PC-9 (cell line): ENCODE measurements at regions of chr20 and their contacts with region 1.

Region 1: GRCh38 chr20:1810926-1811620 is 84.1 kb upstream of the SIRPA start:
- DNase-seq: no peak
- H3K4me3 ChIP-seq: no peak overlapping the region
- H3K27ac ChIP-seq: peak overlapping the region; percentile 86
- H3K4me1 ChIP-seq: peaks cover 58% of the 10 kb centered on the region
- H3K27me3 ChIP-seq: no peaks in the 10 kb centered on the region
- CTCF ChIP-seq: no peak

Region 2: GRCh38 chr20:1776681-1777475 is 34.2 kb before region 1 on chr20:
- CTCF ChIA-PET with region 1: interaction called, 13 read pairs
- POLR2A ChIA-PET with region 1: no interaction called
- intact Hi-C with region 1: no loop called
- DNase-seq: peak; percentile 86 to 90
- H3K4me3 ChIP-seq: peak overlapping the region; percentile 70
- H3K27ac ChIP-seq: peak overlapping the region; percentile 74
- H3K4me1 ChIP-seq: peaks cover 27% of the 10 kb centered on the region
- H3K27me3 ChIP-seq: no peaks in the 10 kb centered on the region
- CTCF ChIP-seq: peak; percentile 89

Region 3: GRCh38 chr20:1830240-1830639 is 19.2 kb after region 1 on chr20:
- CTCF ChIA-PET with region 1: no interaction called
- POLR2A ChIA-PET with region 1: interaction called, 45 read pairs
- intact Hi-C with region 1: loop called (anchors 1 kb)
- DNase-seq: peak; percentile 83 to 86
- H3K4me3 ChIP-seq: no peak overlapping the region
- H3K27ac ChIP-seq: no peak overlapping the region
- H3K4me1 ChIP-seq: peaks cover 26% of the 10 kb centered on the region
- H3K27me3 ChIP-seq: peaks cover 5% of the 10 kb centered on the region; the same call in 1 of the 2 replicates
- CTCF ChIP-seq: no peak